ENCODE measurements at regions of chr6 and their contacts with region 1.

Region 1: GRCh38 chr6:111483736-111484632 is 966 bp upstream of the REV3L start:
- DNase-seq: peak; percentile 97 to 98
- H3K4me3 ChIP-seq: peak overlapping the region; percentile 86 to 99 (median 92)
- H3K27ac ChIP-seq: peak overlapping the region; percentile 98 to 99 (median 99)
- H3K4me1 ChIP-seq: peaks cover 18 to 24% of the 10 kb centered on the region in 2 donors
- H3K27me3 ChIP-seq: no peaks in the 10 kb centered on the region
- CTCF ChIP-seq: peak in 1 of 6 experiments; percentile 5
- POLR2A ChIP-seq: peak in 1 of 2 donors; percentile 87

Region 2: GRCh38 chr6:111367393-111368088 is 116.4 kb before region 1 on chr6:
- intact Hi-C with region 1: no loop called
- DNase-seq: no peak
- H3K4me3 ChIP-seq: no peak overlapping the region
- H3K27ac ChIP-seq: no peak overlapping the region
- H3K4me1 ChIP-seq: no peaks in the 10 kb centered on the region
- H3K27me3 ChIP-seq: no peaks in the 10 kb centered on the region
- CTCF ChIP-seq: no peak
- POLR2A ChIP-seq: no peak

Region 3: GRCh38 chr6:111552241-111552744 is 68.3 kb after region 1 on chr6:
- intact Hi-C with region 1: loop called (anchors 5 kb)
- DNase-seq: peak; percentile 90
- H3K4me3 ChIP-seq: no peak overlapping the region
- H3K27ac ChIP-seq: peak overlapping the region; percentile 92 to 96 (median 95)
- H3K4me1 ChIP-seq: peaks cover 58 to 75% of the 10 kb centered on the region in 2 donors
- H3K27me3 ChIP-seq: no peaks in the 10 kb centered on the region
- CTCF ChIP-seq: no peak
- POLR2A ChIP-seq: peak; percentile 22 to 66

Region 4: DNA sequence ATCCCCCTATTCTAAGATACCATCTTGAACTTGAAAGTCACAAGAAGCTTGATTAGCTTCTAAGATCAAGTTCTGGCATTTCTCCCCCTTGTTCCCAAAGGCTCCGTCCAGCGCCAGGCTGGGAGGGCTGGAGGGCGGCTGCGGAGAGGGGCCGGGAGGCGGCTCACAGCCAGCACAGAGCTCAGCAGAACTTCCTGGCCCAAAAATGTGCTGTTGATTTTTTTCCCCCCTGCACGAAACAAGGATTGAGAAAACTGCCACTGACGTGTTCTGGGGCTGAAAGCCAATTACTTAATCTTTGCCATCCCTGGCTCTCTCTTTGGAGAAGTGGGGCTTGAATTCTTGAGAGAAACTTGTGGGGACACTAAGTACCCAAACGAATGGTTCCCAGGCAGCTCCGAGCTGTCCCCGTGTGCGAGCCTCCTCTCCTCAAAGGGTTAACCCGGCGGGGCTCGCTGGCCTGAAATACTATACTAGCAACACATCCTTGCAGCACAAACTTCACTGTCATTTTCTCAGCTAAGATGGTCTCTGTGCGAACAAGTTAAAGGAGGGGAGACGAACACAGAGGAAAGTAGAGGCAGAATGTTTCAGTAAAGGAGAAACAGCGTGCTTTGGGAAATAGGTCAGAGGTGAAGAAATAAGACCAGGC is 121.2 kb after region 1 on chr6:
- intact Hi-C with region 1: loop called (anchors 10 kb)
- DNase-seq: peak; percentile 77 to 81
- H3K4me3 ChIP-seq: peak overlapping the region in 2 of 3 donors; percentile 31 to 37
- H3K27ac ChIP-seq: peak overlapping the region; percentile 96 to 98 (median 97)
- H3K4me1 ChIP-seq: peaks cover 41 to 55% of the 10 kb centered on the region in 2 donors
- H3K27me3 ChIP-seq: no peaks in the 10 kb centered on the region
- CTCF ChIP-seq: no peak
- POLR2A ChIP-seq: no peak